Activated CD8-positive, alpha-beta T cell treated with anti-CD3 and anti-CD28 coated beads for 36 hours (primary cell): ENCODE measurements at regions of chr12 and their contacts with region 1.

Region 1: GRCh38 chr12:3658327-3659163 is 94.4 kb downstream of the CRACR2A start:
- DNase-seq: peak; percentile 55
- ATAC-seq: no peak
- H3K4me3 Mint-ChIP-seq: no peak overlapping the region
- H3K27ac Mint-ChIP-seq: no peak overlapping the region
- H3K4me1 Mint-ChIP-seq: no peaks in the 10 kb centered on the region
- H3K27me3 Mint-ChIP-seq: no peaks in the 10 kb centered on the region
- CTCF ChIP-seq: peak; percentile 47

Region 2: DNA sequence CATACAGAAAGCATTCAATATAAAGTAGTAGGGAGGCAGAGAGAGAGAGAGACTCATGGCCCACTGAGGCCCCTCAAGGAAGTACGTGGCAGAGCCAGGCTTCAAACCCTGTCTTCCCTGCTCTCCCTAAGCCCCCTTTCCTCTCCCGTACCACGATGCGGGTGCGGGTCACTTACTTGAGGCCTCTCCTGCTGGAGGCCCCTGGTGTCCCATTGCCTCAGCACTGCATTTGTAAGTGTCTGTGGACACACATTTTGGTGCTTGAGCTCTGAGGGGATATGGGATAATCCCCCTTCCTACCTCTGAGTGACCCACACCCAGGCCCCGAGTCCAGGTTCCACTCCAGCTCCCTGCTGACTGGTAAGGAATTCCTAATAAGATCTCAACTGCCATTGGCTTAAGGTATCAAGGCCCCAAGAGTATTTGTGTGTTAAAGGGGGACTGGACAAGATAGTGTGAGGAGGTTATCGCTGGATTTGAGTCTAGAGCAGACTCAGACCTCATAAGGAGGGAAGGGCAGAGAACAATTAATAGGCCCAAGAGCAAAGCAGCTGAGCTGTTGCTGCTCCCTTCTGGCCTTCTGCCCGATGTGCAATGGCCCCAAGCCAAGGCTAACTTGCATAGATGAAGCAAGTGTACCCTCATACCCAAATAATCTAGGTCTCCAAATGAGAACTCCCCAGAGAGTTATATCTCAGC is 22.5 kb after region 1 on chr12:
- CTCF ChIA-PET with region 1: no interaction called
- POLR2A ChIA-PET with region 1: no interaction called
- intact Hi-C with region 1: no loop called
- DNase-seq: no peak
- ATAC-seq: no peak
- H3K4me3 Mint-ChIP-seq: no peak overlapping the region
- H3K27ac Mint-ChIP-seq: no peak overlapping the region
- H3K4me1 Mint-ChIP-seq: no peaks in the 10 kb centered on the region
- H3K27me3 Mint-ChIP-seq: no peaks in the 10 kb centered on the region
- CTCF ChIP-seq: no peak

Region 3: GRCh38 chr12:3777206-3777809 is 118.8 kb after region 1 on chr12:
- CTCF ChIA-PET with region 1: interaction called, 5 read pairs
- POLR2A ChIA-PET with region 1: no interaction called
- intact Hi-C with region 1: loop called (anchors 5 kb)
- DNase-seq: peak; percentile 12
- ATAC-seq: peak; percentile 64
- H3K4me3 Mint-ChIP-seq: no peak overlapping the region
- H3K27ac Mint-ChIP-seq: no peak overlapping the region
- H3K4me1 Mint-ChIP-seq: peaks cover 4% of the 10 kb centered on the region
- H3K27me3 Mint-ChIP-seq: no peaks in the 10 kb centered on the region
- CTCF ChIP-seq: peak; percentile 65